Motor neuron (in vitro differentiated cells): ENCODE measurements at regions of chr3 and their contacts with region 1.

Region 1: GRCh38 chr3:184874709-184875644 is 63.0 kb downstream of the VPS8 start:
- ATAC-seq: peak in 4 of 8 experiments; percentile 27 to 66 (median 60)
- H3K4me3 ChIP-seq: no peak overlapping the region
- H3K27ac ChIP-seq: no peak overlapping the region
- H3K4me1 ChIP-seq: no peaks in the 10 kb centered on the region

Region 2: GRCh38 chr3:185176750-185177359 is 301.9 kb after region 1 on chr3:
- in situ Hi-C with region 1: loop called in 2 of 9 experiments (anchors 25 kb)
- ATAC-seq: no peak
- H3K4me3 ChIP-seq: no peak overlapping the region
- H3K27ac ChIP-seq: no peak overlapping the region
- H3K4me1 ChIP-seq: peaks cover 8 to 10% of the 10 kb centered on the region in 2 donors

Region 3: GRCh38 chr3:185215873-185216606 is 341.1 kb after region 1 on chr3:
- in situ Hi-C with region 1: loop called in 1 of 9 experiments (anchors 25 kb)
- ATAC-seq: no peak
- H3K4me3 ChIP-seq: peak overlapping the region in 1 of 5 donors; percentile 4
- H3K27ac ChIP-seq: peak overlapping the region in 1 of 2 donors; percentile 11
- H3K4me1 ChIP-seq: peaks cover 5 to 7% of the 10 kb centered on the region in 2 donors